ENCODE measurements at regions of chr12 and their contacts with region 1.

Region 1: DNA sequence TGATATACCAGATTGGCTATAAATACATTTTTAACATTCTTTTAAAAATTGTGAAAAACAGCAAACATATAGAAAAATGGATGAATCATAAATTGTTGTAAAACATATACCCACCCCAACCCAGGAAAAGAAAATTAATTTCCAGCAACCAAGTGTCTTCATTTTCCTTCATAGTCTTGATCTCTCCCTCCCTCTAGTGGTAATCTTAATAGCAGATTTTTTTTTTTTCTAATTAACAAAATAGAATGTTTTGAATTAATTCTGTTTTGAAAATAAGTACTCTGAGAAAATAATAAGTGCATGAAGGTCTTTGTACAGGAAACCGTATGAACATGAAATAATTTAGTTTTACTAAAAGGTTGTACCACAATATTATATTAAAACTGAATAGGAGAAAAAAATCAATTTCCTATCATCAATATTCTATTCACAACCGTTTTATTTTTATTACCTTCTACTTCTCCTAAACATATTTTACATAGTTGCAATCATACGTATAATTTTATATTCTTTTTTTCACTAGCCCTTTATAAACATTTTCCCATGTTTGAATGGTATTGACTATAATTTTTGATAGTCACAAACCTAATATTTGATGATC is 7.0 kb downstream of the ETNK1 start:
- DNase-seq: peak; percentile 28
- ATAC-seq: peak; percentile 57; the same call in 1 of the 2 replicates
- H3K4me3 ChIP-seq: no peak overlapping the region
- H3K27ac ChIP-seq: no peak overlapping the region
- H3K4me1 ChIP-seq: peaks cover 3% of the 10 kb centered on the region; the same call in 1 of the 2 replicates
- H3K27me3 ChIP-seq: no peaks in the 10 kb centered on the region
- CTCF ChIP-seq: peak; percentile 67
- POLR2A ChIP-seq: no peak
- RAD21 ChIP-seq: peak; percentile 60

Region 2: GRCh38 chr12:22083167-22083566 is 548.8 kb before region 1 on chr12:
- CTCF ChIA-PET with region 1: no interaction called
- POLR2A ChIA-PET with region 1: no interaction called
- dilution Hi-C with region 1: no loop called
- in situ Hi-C with region 1: no loop called
- intact Hi-C with region 1: loop called (anchors 10 kb)
- DNase-seq: peak; percentile 35
- ATAC-seq: peak; percentile 70
- H3K4me3 ChIP-seq: no peak overlapping the region
- H3K27ac ChIP-seq: no peak overlapping the region
- H3K4me1 ChIP-seq: no peaks in the 10 kb centered on the region
- H3K27me3 ChIP-seq: no peaks in the 10 kb centered on the region; the same call in 1 of the 2 replicates
- CTCF ChIP-seq: peak; percentile 64
- POLR2A ChIP-seq: no peak
- RAD21 ChIP-seq: peak; percentile 74

Region 3: GRCh38 chr12:22459838-22460490 is 172.0 kb before region 1 on chr12:
- CTCF ChIA-PET with region 1: no interaction called
- POLR2A ChIA-PET with region 1: no interaction called
- dilution Hi-C with region 1: no loop called
- in situ Hi-C with region 1: loop called (anchors 10 kb)
- intact Hi-C with region 1: loop called (anchors 5 kb)
- DNase-seq: peak; percentile 54
- ATAC-seq: peak; percentile 79
- H3K4me3 ChIP-seq: no peak overlapping the region
- H3K27ac ChIP-seq: no peak overlapping the region
- H3K4me1 ChIP-seq: no peaks in the 10 kb centered on the region
- H3K27me3 ChIP-seq: no peaks in the 10 kb centered on the region
- CTCF ChIP-seq: peak; percentile 60
- POLR2A ChIP-seq: no peak
- RAD21 ChIP-seq: peak; percentile 38

Region 4: DNA sequence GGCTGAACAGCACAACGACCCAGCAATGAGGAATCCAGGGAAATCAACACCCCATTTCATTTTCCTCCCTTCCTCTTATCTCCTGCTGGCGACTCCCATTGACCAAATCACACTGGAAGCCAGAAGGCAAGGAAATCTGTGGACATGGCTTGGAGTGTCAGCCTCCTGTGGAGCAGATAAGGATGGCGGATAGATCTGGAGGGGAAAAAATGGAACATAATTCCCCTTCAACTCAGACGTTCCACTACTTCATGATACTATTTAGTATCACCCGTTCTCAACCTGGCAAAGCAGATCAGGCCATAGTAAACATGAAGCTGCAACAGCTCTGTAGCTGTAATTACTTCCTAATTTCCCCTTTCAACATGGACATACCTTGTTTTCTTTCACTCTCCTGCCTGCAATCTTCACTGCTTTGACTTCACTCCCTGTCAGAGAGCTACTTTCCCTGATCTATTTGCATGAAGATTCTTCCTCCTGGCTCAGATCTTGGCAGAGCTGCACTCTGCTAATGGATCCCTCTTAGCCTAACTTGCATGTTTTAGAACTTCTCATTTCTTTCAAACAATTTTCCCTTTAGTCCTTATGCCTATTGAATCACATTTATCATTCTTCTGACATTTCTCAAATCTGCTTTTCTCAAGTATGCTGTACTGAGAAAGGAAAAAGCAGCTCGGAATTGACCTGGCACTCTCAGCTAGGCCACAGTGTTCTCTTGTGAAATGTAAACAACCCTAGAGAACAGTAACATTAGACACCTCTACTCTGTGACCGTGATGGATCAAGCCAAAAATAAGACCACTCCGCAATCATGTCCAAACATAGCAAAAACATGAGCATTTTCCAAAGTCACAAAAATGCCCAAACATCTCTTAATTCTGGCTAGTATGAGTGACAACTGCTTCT is 128.1 kb after region 1 on chr12:
- CTCF ChIA-PET with region 1: no interaction called
- POLR2A ChIA-PET with region 1: no interaction called
- dilution Hi-C with region 1: no loop called
- in situ Hi-C with region 1: no loop called
- intact Hi-C with region 1: no loop called
- DNase-seq: no peak
- ATAC-seq: no peak
- H3K4me3 ChIP-seq: no peak overlapping the region
- H3K27ac ChIP-seq: no peak overlapping the region
- H3K4me1 ChIP-seq: no peaks in the 10 kb centered on the region
- H3K27me3 ChIP-seq: no peaks in the 10 kb centered on the region
- CTCF ChIP-seq: no peak
- POLR2A ChIP-seq: no peak
- RAD21 ChIP-seq: no peak

Measured in IMR-90 (cell line).